ENCODE measurements at regions of chr16 and their contacts with region 1.

Region 1: DNA sequence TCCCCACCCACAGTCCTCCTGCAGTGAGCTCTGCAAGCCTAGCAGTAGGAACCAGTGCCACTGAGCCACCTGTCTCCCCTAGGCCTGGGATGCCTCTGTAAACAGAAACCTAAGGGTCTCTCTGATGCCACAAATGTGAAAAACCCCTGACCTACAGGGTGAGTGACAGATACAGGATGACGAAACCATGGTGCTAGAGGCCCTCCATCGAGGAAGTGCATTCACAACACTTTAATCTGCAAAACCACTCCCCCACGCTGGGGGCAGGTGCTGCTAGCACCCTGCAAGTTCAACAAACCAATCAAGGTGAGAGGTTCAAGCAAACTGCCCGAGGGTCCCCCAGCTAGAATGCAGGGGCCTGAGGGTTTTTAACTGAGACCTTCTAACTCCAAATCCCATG is 59.5 kb downstream of the CDYL2 start:
- DNase-seq: no peak
- ATAC-seq: no peak

Region 2: DNA sequence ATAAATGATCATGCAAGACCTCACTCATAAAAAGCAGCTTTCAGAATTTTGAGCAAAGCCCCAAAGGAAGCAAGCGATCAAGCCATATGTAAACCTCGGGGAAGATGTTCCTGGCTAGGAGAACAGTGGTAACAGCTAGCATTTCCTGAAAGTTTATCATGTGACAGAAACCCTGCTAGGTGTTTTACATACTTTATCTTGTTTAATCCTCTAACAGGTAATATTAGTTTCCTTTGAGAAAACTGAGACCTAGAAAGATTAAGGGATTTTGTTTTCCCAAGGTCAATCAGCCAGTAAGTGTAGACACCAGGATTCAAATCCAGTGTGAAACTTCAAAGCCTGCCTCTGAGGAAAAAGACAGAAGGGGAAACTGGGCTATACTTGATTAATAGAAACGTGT is 781.9 kb before region 1 on chr16:
- intact Hi-C with region 1: loop called (anchors 5 kb)
- DNase-seq: no peak
- ATAC-seq: no peak

Measured in sciatic nerve (tissue), 2 donors.